Adrenal gland (tissue), 19 donors: ENCODE measurements at regions of chr1 and their contacts with region 1.

Region 1: DNA sequence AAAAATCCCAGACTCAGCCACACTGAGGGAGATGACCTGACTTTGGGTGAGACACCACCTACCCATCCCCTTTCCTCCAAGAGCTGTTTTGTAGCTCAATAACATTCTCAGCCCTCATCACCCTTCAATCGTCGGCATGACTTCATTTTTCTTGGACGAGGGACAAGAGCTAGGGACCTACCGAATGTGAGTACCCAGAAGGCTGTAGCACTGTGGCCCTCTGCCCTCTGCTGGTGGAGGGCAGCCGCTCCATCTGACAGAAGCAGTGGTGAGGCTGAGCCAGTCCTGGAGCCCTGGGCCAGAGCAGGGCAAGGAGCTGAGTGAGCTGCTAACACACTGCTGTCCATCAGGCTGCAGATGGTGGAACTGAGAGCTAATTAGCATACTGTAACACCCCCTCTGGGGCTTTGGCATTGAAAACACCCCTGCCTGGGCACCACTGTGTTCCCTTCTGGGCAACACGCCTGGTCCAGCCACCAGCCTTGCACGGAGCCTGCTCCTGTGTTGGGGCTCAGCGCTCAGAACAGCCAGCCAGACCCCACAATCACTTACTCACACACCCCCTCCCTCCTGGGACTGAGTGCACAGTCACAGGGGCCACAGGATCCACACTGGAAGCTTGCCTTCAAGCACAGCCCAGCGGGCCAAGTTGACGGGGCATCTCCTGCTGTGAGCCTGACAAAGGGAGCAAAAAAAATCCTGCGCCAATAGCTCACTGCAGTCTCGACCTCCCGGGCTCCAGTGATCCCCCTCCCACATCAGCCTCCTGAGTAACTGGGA is 18.3 kb upstream of the ALPL start:
- DNase-seq: peak in 5 of 7 donors; percentile 39 to 50 (median 43)
- H3K4me3 ChIP-seq: no peak overlapping the region
- H3K27ac ChIP-seq: no peak overlapping the region
- H3K4me1 ChIP-seq: no peaks in the 10 kb centered on the region
- H3K27me3 ChIP-seq: no peaks in the 10 kb centered on the region
- CTCF ChIP-seq: peak in 4 of 6 experiments; percentile 4 to 44 (median 32)
- POLR2A ChIP-seq: no peak

Region 2: DNA sequence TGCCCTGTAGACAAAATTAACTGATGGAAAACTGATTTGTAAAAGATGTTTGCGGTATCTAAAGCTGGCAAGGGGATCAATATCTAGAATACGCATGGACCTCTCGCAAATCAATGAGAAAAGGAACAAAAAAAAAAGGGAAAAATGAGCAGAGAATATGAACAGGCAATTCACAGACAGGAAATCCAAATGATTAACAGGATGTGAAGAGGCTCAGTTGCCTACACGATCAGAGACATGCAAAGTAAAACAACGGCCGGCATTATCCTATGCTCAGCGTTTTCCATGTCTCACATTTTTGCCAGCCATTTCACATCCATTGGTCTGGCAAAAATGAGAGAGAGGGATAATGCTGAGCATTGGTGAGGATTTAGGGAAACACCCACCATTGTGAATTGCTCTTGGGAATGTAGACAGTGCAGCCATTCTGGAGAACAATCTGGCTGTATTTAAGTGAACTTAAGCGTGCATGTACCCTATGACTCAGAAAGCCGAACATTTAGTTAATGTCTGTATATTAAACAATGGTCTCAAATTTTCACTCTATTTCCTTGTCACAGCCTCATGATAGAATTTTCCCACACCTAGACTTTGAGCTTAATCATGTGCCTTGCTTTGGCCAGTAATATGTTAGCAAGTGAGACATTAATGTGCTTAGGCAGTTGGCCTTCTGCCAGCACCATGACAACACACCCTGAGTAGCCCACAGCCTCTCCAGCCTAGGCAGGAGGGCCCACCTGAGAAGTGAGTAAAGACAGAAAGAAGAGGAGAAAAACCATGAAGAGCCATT is 112.1 kb before region 1 on chr1:
- intact Hi-C with region 1: loop called (anchors 10 kb)
- DNase-seq: no peak
- H3K4me3 ChIP-seq: no peak overlapping the region
- H3K27ac ChIP-seq: no peak overlapping the region
- H3K4me1 ChIP-seq: no peaks in the 10 kb centered on the region
- H3K27me3 ChIP-seq: peaks cover 14% of the 10 kb centered on the region
- CTCF ChIP-seq: no peak
- POLR2A ChIP-seq: no peak

Region 3: DNA sequence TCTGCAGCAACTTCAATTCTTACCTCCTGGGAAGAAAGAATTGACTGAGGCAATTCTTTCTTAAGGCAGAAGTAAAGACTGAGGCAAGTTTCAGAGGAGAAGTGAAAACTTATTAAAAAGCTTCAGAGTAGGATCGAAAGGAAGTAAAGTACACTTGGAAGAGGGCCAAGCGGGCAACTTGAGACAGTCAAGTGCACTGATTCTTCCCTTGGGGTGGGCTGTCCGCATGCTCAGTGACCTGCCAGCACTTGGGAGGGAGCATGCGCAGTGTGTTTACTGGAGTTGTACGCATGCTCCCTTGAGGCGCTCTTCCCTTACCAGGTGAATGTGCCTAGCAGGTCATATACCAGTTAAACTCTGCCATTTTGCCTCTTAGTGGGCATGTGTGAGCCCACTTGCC is 106.3 kb before region 1 on chr1:
- intact Hi-C with region 1: loop called (anchors 10 kb)
- DNase-seq: peak in 2 of 7 donors; percentile 21 to 41
- H3K4me3 ChIP-seq: no peak overlapping the region
- H3K27ac ChIP-seq: no peak overlapping the region
- H3K4me1 ChIP-seq: no peaks in the 10 kb centered on the region
- H3K27me3 ChIP-seq: peaks cover 14% of the 10 kb centered on the region
- CTCF ChIP-seq: no peak
- POLR2A ChIP-seq: no peak

Region 4: DNA sequence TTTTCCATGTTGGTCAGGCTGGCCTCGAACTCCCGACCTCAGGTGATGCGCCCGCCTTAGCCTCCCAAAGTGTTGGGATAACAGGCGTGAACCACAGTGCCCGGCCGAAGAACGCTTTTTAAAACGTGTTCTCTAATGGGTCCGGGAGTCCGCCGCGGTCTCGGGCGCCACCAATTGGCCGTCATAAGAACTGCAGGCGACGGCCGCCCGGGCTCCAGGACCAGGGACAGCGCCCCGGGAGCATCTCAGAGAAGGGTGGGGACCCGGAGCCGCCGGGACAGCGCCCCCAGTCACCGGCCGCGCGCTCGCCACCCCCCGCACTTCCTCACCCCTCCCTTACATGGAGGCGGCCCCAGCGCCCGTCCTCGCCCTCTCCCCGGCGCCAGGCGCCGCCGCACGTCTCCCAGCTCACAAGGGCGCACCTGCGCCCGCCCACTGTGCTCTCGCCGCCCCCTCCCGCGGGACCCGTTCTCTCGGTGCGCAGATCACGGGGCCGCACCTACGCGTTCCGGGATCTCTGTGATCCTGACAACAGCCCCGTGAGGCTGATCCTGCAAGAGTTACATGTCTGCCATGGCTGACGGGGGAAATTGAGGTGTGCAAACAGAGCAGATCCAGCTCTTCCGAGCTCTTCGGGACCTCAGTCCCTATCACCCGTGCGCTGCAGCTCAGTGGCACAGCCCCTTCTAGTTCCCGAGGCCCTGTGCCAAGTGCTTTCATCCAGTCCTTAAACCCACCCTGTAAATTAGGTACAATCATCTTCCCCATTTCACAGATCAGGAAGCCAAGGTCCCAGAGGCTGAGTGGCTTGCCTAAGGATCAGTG is 168.3 kb after region 1 on chr1:
- intact Hi-C with region 1: no loop called
- DNase-seq: peak; percentile 81 to 94 (median 89)
- H3K4me3 ChIP-seq: no peak overlapping the region
- H3K27ac ChIP-seq: peak overlapping the region in 2 of 5 donors; percentile 63 to 67
- H3K4me1 ChIP-seq: peaks cover 15 to 34% of the 10 kb centered on the region in 2 donors
- H3K27me3 ChIP-seq: no peaks in the 10 kb centered on the region
- CTCF ChIP-seq: peak; percentile 94 to 97 (median 96)
- POLR2A ChIP-seq: no peak